Brain microvascular endothelial cell (primary cell): ENCODE measurements at regions of chr4 and their contacts with region 1.

Region 1: DNA sequence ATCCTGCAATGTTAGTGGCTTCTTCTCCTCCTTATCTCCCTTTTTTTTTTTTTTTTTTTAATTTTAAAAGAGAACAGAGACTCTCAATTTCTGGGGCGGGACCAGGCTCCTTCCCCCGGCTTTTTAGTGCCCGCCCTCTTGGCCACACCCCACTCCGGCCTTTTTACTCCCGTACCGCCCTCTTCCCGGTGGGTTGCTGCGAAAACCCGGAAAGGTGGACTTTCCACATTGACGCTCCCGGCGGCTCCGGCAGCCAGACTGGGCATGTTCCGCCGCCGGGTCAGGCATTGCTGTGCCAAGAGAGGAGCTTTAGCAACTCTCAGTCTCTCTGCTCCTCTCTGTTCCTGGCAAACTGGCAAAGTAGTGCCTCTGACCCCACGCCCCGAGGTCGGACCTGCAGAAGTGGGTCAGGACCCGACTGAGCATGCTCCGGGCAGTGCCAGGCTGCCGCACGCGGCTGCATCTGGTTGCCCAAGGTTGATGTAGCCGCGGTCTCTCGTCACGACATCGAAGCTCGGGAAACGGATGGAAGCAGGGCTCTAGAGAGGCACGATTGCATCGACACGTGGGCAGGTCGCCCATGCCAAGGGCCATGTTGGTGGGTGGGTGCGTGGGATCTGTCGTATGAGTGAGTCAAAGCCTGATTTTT is 1.1 kb upstream of the MFAP3L start:
- DNase-seq: peak; percentile 93
- H3K4me3 ChIP-seq: peak overlapping the region; percentile 84
- H3K27ac ChIP-seq: no peak overlapping the region
- H3K27me3 ChIP-seq: no peaks in the 10 kb centered on the region
- CTCF ChIP-seq: no peak

Region 2: DNA sequence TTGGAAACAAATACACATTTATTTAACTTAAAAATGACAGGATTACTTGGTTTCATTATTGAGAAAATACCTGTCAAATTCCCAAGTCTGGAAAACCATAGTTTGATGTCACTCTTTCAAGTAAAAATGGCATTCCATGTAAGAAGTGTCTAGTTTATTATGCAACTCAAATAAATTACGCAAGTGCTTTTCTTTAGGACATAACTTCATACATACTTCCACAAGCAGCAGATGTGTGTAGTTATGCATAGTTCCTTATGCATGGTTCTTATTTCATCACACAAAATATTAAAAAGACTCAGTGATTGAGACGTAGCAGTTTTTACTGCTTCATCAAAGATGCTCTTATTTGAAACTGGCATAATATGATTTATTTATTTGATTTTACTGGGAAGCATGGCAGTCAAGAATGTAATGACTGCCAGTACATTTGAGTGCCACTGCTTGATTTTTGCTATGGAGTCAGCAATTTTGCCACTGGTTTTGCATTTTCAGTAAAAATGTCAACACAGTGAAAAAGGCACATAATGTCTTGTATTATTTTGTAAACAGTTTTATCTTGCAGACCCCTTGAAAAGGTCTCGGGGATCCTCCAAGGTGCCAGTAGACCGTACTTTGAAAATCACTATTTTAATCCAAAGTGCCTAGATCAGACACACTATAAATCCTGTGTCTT is 344.8 kb before region 1 on chr4:
- in situ Hi-C with region 1: no loop called
- DNase-seq: no peak
- H3K4me3 ChIP-seq: no peak overlapping the region
- H3K27ac ChIP-seq: no peak overlapping the region
- H3K27me3 ChIP-seq: no peaks in the 10 kb centered on the region
- CTCF ChIP-seq: no peak

Region 3: GRCh38 chr4:169723207-169723965 is 303.9 kb before region 1 on chr4:
- in situ Hi-C with region 1: no loop called
- DNase-seq: peak; percentile 5
- H3K4me3 ChIP-seq: no peak overlapping the region
- H3K27ac ChIP-seq: no peak overlapping the region
- H3K27me3 ChIP-seq: no peaks in the 10 kb centered on the region
- CTCF ChIP-seq: peak; percentile 56

Region 4: GRCh38 chr4:169810325-169811323 is 216.7 kb before region 1 on chr4:
- in situ Hi-C with region 1: loop called (anchors 25 kb)
- DNase-seq: peak; percentile 82
- H3K4me3 ChIP-seq: no peak overlapping the region
- H3K27ac ChIP-seq: no peak overlapping the region
- H3K27me3 ChIP-seq: no peaks in the 10 kb centered on the region
- CTCF ChIP-seq: peak; percentile 78

Region 5: GRCh38 chr4:169890906-169891305 is 136.4 kb before region 1 on chr4:
- in situ Hi-C with region 1: no loop called
- DNase-seq: no peak
- H3K4me3 ChIP-seq: no peak overlapping the region
- H3K27ac ChIP-seq: no peak overlapping the region
- H3K27me3 ChIP-seq: no peaks in the 10 kb centered on the region
- CTCF ChIP-seq: no peak